A549 (cell line): ENCODE measurements at regions of chr21 and their contacts with region 1.

Region 1: GRCh38 chr21:41612674-41613532 is 104.9 kb upstream of the TMPRSS2 start:
- DNase-seq: peak; percentile 50 to 75
- ATAC-seq: peak; percentile 79 to 91
- H3K4me3 ChIP-seq: no peak overlapping the region
- H3K27ac ChIP-seq: peak overlapping the region; percentile 72 to 85
- H3K4me1 ChIP-seq: peaks cover 28% of the 10 kb centered on the region
- CTCF ChIP-seq: peak; percentile 65
- EP300 ChIP-seq: no peak
- POLR2A ChIP-seq: no peak
- RAD21 ChIP-seq: peak; percentile 85 to 97

Region 2: DNA sequence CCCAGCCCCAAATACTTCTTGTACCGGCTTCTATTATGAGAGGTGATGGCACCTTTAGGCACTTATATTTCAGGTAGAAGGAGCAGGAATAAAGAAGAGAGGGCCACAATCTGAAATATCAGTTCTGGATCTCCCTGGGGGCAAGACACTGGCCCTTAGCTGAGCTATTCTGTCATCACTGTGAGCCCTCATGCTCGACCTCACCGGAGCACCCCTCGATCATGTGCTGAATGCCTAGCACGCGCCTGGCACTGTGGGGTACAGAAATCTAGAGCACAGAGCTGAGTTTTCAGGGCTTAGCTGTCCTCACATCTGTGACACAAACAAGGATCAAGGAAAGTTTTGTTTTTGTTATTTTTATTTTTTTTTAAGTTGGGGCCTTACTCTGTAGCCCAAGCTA is 194.5 kb before region 1 on chr21:
- CTCF ChIA-PET with region 1: no interaction called
- POLR2A ChIA-PET with region 1: no interaction called
- DNase-seq: no peak
- ATAC-seq: no peak
- H3K4me3 ChIP-seq: no peak overlapping the region
- H3K27ac ChIP-seq: no peak overlapping the region
- H3K4me1 ChIP-seq: no peaks in the 10 kb centered on the region
- CTCF ChIP-seq: no peak
- EP300 ChIP-seq: no peak
- POLR2A ChIP-seq: no peak
- RAD21 ChIP-seq: no peak

Region 3: GRCh38 chr21:41477641-41478318 is 135.1 kb before region 1 on chr21:
- CTCF ChIA-PET with region 1: no interaction called
- POLR2A ChIA-PET with region 1: no interaction called
- DNase-seq: no peak
- ATAC-seq: no peak
- H3K4me3 ChIP-seq: no peak overlapping the region
- H3K27ac ChIP-seq: no peak overlapping the region
- H3K4me1 ChIP-seq: no peaks in the 10 kb centered on the region
- CTCF ChIP-seq: no peak
- EP300 ChIP-seq: no peak
- POLR2A ChIP-seq: no peak
- RAD21 ChIP-seq: no peak

Region 4: GRCh38 chr21:41535819-41536640 is 76.9 kb before region 1 on chr21:
- CTCF ChIA-PET with region 1: no interaction called
- POLR2A ChIA-PET with region 1: no interaction called
- DNase-seq: no peak
- ATAC-seq: no peak
- H3K4me3 ChIP-seq: no peak overlapping the region
- H3K27ac ChIP-seq: no peak overlapping the region
- H3K4me1 ChIP-seq: no peaks in the 10 kb centered on the region
- CTCF ChIP-seq: no peak
- EP300 ChIP-seq: no peak
- POLR2A ChIP-seq: no peak
- RAD21 ChIP-seq: no peak

Region 5: DNA sequence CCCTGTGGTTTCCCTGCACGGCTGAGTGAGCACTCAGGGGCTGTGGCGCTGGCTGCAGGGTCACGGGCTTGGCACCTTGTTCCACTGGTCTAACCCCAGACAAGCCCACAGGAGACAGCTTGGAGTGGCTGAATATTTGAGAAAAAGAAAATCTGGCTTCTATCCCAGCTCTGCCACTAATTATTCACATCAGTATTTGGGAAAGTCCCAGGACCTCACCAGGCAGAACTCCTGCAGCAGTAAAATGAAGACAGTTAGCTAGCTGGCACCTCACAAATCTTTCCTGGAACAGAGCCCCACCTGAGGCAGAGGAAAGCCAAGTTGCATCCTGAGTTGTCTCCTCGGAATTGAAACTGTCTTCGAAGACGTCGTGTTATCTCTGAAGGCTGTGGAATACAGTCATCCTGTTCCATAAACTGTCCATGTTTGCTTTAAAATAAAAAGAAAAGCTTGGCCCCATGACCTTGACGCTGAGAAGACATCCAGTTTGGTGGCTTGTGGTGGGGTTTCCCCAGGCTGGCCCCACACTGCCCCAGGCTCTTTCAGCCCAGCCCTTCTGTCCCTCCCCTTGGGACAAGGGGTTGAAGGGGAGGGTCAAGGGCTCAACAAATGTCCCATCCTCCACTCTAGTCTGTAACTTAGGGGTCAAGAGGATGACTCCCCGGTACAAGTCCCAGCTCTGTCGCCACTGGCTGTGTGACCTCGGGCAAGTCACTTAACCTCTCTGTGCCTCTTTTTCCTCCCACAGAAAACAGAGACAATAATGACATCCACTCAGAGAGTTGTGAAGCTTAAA is 11.1 kb before region 1 on chr21:
- CTCF ChIA-PET with region 1: interaction called, 26 read pairs
- POLR2A ChIA-PET with region 1: no interaction called
- DNase-seq: no peak
- ATAC-seq: no peak
- H3K4me3 ChIP-seq: no peak overlapping the region
- H3K27ac ChIP-seq: no peak overlapping the region
- H3K4me1 ChIP-seq: no peaks in the 10 kb centered on the region
- CTCF ChIP-seq: no peak
- EP300 ChIP-seq: no peak
- POLR2A ChIP-seq: no peak
- RAD21 ChIP-seq: no peak

Region 6: DNA sequence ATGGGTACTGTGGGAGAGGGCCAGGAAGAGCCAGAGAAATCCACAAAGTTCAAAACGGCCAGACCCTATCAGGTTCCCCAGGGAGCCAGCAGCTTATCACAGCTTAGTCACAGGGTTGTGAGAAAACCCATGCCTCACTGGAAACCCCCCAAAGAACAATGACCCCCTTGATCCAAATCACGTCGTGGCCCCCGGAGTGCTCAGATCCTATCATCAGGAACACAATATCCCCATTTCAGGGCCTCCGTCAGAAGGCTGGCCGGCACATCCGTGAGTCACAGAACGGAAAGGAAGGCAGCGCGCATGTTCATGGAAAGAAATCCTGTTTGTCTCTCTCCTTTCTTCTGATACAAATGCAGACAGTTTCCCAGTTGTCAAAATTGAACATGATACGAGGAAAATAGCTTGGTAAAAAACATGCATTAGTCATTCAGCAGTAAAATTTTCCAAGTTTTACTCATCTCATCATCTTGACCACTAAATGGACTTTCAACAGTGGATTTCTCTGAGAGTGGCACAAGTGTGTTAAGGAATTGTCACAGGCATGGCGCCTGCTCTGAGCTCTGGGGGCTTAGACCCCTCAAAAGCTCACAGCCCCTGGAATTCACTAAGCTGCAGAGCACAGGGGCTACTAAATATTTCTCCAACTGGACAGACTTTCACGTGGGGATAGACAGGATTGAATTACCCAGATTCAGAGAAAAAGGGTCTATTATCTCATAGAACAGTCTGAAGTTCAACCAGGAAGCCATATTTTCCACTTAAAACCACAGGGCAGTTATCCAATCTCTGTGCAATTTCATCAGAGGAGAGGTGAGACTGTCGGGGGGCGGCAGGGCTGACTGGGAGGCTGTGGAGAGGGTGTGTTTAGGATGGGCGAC is 29.2 kb after region 1 on chr21:
- CTCF ChIA-PET with region 1: interaction called, 10 read pairs
- POLR2A ChIA-PET with region 1: no interaction called
- DNase-seq: peak; percentile 43 to 72
- ATAC-seq: peak; percentile 89 to 90
- H3K4me3 ChIP-seq: no peak overlapping the region
- H3K27ac ChIP-seq: peak overlapping the region; percentile 86 to 91
- H3K4me1 ChIP-seq: peaks cover 22% of the 10 kb centered on the region
- CTCF ChIP-seq: no peak
- EP300 ChIP-seq: 0 out of 5 replicates have a peak, but pooled peaks of 1 of the 2 experiments have one; percentile 38
- POLR2A ChIP-seq: no peak
- RAD21 ChIP-seq: no peak

Region 7: GRCh38 chr21:41726945-41727783 is 114.3 kb after region 1 on chr21:
- CTCF ChIA-PET with region 1: interaction called, 10 read pairs
- POLR2A ChIA-PET with region 1: no interaction called
- DNase-seq: peak; percentile 35 to 36
- ATAC-seq: peak; percentile 88 to 89
- H3K4me3 ChIP-seq: no peak overlapping the region
- H3K27ac ChIP-seq: peak overlapping the region; percentile 66 to 89
- H3K4me1 ChIP-seq: peaks cover 20% of the 10 kb centered on the region
- CTCF ChIP-seq: no peak
- EP300 ChIP-seq: no peak
- POLR2A ChIP-seq: no peak
- RAD21 ChIP-seq: no peak

Region 8: DNA sequence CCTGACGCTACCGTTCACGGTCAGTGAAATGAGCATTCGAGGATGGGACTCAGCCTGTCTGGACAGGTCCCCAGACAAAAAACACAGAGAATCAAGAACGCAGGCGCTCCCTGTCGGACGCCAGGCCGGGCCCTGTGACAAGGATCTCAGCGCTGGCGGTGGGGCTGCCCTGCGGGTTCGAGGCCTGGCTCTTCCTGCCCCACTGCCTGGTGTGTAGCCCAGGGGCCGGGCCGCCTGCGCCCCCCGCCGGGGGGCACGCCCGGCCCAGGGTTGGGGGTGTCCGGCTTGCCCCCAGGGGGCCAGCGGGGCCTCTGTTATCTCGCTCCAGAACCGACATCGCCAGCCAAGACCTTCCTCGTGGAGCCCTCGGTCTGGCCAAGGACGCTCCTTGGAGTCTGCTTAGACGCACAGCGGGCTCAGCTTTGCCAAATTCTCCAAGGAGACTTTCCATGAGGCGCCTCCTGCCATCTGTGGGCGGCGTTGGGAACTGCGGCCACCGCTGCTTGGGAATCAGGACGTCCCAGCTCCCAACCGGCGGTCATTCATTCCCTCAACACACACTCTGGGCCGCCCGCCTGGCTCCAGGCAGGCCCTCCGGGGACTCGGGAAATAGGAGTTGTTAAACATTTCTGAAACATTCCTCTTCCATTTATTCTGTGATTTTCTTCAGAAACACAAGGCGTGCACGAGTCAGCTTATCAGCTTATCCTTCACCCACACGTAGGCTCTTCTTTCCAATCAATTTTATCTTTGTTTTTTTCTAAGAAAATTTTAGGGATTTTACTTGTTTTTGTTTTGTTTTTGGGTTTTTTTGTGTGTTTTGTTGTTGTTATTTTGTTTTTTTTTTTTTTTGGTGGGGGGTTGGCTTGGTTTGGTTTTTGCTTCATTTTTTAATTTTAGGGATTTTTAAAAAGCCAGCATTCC is 165.3 kb after region 1 on chr21:
- CTCF ChIA-PET with region 1: interaction called, 189 read pairs
- POLR2A ChIA-PET with region 1: interaction called, 12 read pairs
- DNase-seq: peak in 1 of 2 experiments; percentile 85
- ATAC-seq: peak; percentile 96 to 99
- H3K4me3 ChIP-seq: no peak overlapping the region
- H3K27ac ChIP-seq: peak overlapping the region; percentile 67 to 87
- H3K4me1 ChIP-seq: peaks cover 20% of the 10 kb centered on the region
- CTCF ChIP-seq: peak; percentile 62
- EP300 ChIP-seq: no peak
- POLR2A ChIP-seq: no peak
- RAD21 ChIP-seq: peak; percentile 87

Region 9: DNA sequence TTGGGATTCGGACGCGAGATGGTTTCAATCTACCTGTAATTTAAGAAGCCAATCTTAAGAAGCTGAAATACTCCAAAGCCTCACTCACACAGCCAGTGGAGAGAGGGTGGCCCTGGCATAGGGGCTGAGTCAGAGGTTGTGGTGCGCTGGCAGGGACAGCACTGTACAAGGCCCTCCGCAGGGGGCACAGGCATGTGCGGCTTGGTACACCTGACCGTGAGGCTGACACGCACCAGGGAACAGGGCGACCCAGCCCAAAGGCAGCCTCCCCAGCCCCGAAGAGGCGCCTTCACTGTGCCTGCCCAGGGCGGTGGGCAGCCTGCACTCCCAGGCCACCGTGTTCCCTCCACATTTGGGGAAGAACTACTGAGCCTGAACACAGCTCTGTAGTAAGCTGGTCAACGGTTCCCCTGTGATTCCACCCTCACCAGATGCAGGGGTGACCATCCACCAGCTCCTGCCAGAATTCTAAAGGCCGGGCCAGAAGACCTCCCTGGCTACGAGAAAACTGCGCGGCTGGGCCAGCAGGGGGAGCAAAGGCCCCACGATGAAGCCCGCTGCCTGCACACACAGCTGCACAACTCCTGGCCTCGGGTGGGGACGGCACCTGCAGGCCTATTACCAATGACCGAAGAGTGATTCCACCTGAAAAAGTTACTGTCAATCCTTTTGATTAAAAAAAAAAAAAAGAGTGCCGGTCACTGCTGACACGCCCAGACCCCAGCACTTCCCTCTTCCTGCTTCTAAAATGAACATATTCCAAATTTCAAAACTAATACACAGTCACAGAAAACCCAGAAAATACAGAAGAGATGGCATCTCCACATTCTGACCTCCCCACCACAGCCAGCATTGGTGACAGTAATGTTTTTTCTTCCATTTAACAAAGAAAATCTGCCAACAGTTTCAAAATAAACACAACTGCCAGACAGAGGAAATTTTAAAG is 203.6 kb after region 1 on chr21:
- CTCF ChIA-PET with region 1: interaction called, 127 read pairs
- POLR2A ChIA-PET with region 1: no interaction called
- DNase-seq: peak; percentile 19 to 40
- ATAC-seq: peak; percentile 87 to 93
- H3K4me3 ChIP-seq: no peak overlapping the region
- H3K27ac ChIP-seq: no peak overlapping the region
- H3K4me1 ChIP-seq: no peaks in the 10 kb centered on the region
- CTCF ChIP-seq: peak; percentile 45
- EP300 ChIP-seq: no peak
- POLR2A ChIP-seq: no peak
- RAD21 ChIP-seq: peak; percentile 45 to 65; a peak in 4 of 5 replicates